ENCODE measurements at regions of chr18 and their contacts with region 1.

Region 1: DNA sequence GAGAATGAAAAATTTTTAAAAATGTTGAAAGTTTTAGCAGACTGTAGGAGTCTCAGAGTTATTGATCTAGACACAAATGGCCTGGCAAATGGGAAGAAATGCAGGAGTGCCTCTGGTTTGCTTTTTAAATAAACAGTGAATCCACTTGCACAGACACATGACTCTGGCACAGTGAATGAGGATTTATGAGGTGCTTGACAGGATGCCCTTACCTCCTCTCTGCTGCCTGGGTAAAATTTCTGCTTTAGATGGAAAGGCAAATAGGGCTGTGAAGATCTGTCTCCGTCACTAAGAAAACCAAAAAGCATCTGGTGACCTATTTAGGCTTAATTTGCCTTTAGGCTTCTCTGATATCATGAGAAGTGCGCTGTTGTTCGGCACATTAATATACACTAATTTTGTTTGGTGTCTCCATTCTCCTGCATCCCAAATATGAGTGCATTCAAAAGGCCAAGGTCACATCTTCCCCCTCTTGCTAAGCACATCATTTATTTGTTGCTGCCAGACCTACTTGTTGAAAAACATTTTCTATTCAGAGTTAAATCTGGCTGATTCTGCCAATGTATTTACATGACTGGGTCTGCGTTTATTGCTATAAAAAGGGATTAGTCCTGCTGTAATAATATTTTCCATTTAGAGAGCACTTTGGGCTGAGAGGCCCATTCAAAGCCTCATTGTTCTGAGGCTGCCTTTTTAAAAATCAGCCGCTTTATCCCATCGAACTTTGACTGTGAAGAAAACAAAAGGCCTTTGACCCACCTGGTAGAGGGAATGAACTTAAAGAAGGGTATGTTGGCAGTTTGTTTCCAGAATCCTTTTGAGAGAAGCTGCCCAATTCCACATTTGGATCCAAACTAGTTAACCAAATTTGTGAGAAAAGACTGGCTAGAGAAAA is 94.9 kb downstream of the RNF152 start:
- DNase-seq: no peak
- ATAC-seq: no peak
- H3K4me3 ChIP-seq: no peak overlapping the region
- H3K27ac ChIP-seq: no peak overlapping the region
- H3K4me1 ChIP-seq: no peaks in the 10 kb centered on the region
- H3K27me3 ChIP-seq: no peaks in the 10 kb centered on the region; a peak in 2 of 4 replicates
- CTCF ChIP-seq: no peak
- EP300 ChIP-seq: no peak
- POLR2A ChIP-seq: no peak
- RAD21 ChIP-seq: no peak

Region 2: GRCh38 chr18:62621546-62621945 is 823.6 kb after region 1 on chr18:
- CTCF ChIA-PET with region 1: no interaction called
- POLR2A ChIA-PET with region 1: interaction called, 12 read pairs
- RAD21 ChIA-PET with region 1: no interaction called
- SMC1A ChIA-PET with region 1: no interaction called
- in situ Hi-C with region 1: no loop called
- intact Hi-C with region 1: no loop called
- DNase-seq: no peak
- ATAC-seq: no peak
- H3K4me3 ChIP-seq: no peak overlapping the region
- H3K27ac ChIP-seq: no peak overlapping the region
- H3K4me1 ChIP-seq: no peaks in the 10 kb centered on the region
- H3K27me3 ChIP-seq: no peaks in the 10 kb centered on the region
- CTCF ChIP-seq: no peak
- EP300 ChIP-seq: no peak
- POLR2A ChIP-seq: no peak
- RAD21 ChIP-seq: no peak